ENCODE measurements at regions of chr19 and their contacts with region 1.

Region 1: DNA sequence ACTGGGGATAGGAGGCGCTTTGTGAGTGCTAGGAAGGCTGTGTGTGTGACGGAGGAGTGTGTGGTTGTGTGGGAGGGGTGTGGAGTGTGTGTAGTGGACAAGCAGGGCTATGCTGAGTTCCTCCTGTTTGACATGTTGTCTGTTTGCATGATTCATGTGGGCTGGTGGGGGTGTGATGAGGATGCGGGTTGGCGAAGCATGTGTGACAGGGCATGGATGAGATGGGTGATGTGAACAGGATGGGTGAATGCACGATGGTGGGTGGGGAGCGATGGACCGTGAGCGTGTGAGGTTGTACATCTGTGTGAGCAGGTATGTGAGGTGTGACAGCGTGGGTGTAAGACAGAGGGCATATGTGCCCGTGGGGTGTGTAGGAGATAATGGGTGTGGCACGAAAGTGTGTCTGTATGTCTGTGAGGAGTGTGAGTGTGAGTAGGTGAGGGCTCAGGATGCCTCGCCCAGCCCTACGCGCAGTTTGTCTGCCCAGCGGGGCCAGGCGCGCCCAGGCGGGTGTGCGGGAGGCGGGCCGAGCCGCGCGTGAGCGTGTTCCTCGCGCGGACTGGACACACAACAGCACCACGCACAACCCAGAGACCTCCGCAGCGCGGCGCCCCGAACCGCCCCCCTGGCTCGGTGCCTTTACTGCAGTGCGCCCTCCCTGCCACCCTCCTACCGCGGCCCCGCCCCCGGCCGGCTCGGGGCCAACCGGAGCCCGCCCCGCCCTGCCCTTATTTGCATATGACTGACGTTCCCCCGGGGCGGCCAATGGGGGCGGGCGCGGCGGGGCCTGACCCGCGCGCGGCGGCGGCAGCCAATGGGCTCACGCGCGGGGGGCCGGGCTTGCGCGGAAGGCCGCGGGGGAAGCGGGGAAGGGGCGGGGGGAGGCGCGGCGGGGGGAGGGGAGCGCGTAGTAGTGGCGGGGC is 14.4 kb downstream of the CIC start:
- DNase-seq: peak; percentile 90 to 98 (median 97)
- ATAC-seq: peak; percentile 69
- H3K4me3 ChIP-seq: peak overlapping the region; percentile 40 to 59
- H3K4me3 Mint-ChIP-seq: no peak overlapping the region
- H3K27ac ChIP-seq: peak overlapping the region; percentile 85 to 94
- H3K27ac Mint-ChIP-seq: no peak overlapping the region
- H3K4me1 ChIP-seq: peaks cover 47% of the 10 kb centered on the region
- H3K4me1 Mint-ChIP-seq: peaks cover 48% of the 10 kb centered on the region
- H3K27me3 ChIP-seq: no peaks in the 10 kb centered on the region
- H3K27me3 Mint-ChIP-seq: no peaks in the 10 kb centered on the region
- CTCF ChIP-seq: no peak

Region 2: DNA sequence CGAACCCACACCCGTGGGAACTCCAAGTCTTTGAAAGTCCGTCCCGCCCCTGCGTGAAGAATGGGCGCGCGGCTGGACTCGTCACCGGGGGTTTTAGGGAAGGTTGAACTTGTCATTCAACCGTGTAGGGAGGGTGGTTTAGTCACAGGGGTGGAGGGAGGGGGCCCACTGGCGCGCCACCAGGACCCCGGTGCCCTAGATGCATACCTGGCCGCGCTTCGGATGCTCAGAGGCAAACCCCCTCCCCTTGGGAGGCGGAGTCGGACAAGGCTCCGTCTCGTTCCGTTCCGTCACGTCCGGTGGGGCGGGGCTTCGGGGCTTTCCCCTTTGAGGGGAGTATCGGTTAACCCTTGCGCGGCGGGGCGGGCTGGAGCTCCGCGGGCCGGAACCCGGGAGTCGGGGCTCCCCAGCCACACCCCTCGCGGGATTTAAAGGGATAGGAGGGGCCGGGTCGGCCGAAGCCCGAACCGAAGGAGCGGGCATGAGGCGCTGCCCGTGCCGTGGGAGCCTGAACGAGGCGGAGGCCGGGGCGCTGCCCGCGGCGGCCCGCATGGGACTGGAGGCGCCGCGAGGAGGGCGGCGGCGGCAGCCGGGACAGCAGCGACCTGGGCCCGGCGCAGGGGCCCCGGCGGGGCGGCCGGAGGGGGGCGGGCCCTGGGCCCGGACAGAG is 1566.6 kb before region 1 on chr19 and contains the starts of genes COQ8B and ITPKC:
- CTCF ChIA-PET with region 1: no interaction called
- POLR2A ChIA-PET with region 1: no interaction called
- intact Hi-C with region 1: loop called in 1 of 2 experiments (anchors 10 kb)
- DNase-seq: peak; percentile 98 to 100 (median 100)
- ATAC-seq: peak; percentile 74
- H3K4me3 ChIP-seq: peak within 1 kb of the TSS; percentile 66 to 93
- H3K4me3 Mint-ChIP-seq: peak within 1 kb of the TSS; percentile 88
- H3K27ac ChIP-seq: peak within 1 kb of the TSS; percentile 88 to 89
- H3K27ac Mint-ChIP-seq: peak within 1 kb of the TSS; percentile 97
- H3K4me1 ChIP-seq: peaks cover 61% of the 10 kb centered on the region
- H3K4me1 Mint-ChIP-seq: peaks cover 70% of the 10 kb centered on the region
- H3K27me3 ChIP-seq: no peaks in the 10 kb centered on the region
- H3K27me3 Mint-ChIP-seq: no peaks in the 10 kb centered on the region
- CTCF ChIP-seq: no peak
- total RNA-seq, gene COQ8B: 14.0 to 14.2 TPM
- total RNA-seq, gene ITPKC: 5.9 to 6.4 TPM

Region 3: GRCh38 chr19:41998246-41999020 is 285.0 kb before region 1 on chr19:
- CTCF ChIA-PET with region 1: no interaction called
- POLR2A ChIA-PET with region 1: no interaction called
- intact Hi-C with region 1: no loop called
- DNase-seq: peak in 5 of 9 experiments; percentile 8 to 54 (median 28)
- ATAC-seq: no peak
- H3K4me3 ChIP-seq: no peak overlapping the region
- H3K4me3 Mint-ChIP-seq: no peak overlapping the region
- H3K27ac ChIP-seq: no peak overlapping the region
- H3K27ac Mint-ChIP-seq: no peak overlapping the region
- H3K4me1 ChIP-seq: peaks cover 15% of the 10 kb centered on the region
- H3K4me1 Mint-ChIP-seq: peaks cover 37% of the 10 kb centered on the region
- H3K27me3 ChIP-seq: peaks cover 26 to 32% of the 10 kb centered on the region in 2 experiments
- H3K27me3 Mint-ChIP-seq: peaks cover 62% of the 10 kb centered on the region
- CTCF ChIP-seq: peak; percentile 41

Region 4: GRCh38 chr19:42154471-42155323 is 128.7 kb before region 1 on chr19:
- CTCF ChIA-PET with region 1: no interaction called
- POLR2A ChIA-PET with region 1: no interaction called
- intact Hi-C with region 1: no loop called
- DNase-seq: no peak
- ATAC-seq: peak; percentile 34
- H3K4me3 ChIP-seq: no peak overlapping the region
- H3K4me3 Mint-ChIP-seq: no peak overlapping the region
- H3K27ac ChIP-seq: no peak overlapping the region
- H3K27ac Mint-ChIP-seq: no peak overlapping the region
- H3K4me1 ChIP-seq: peaks cover 13% of the 10 kb centered on the region
- H3K4me1 Mint-ChIP-seq: peaks cover 17% of the 10 kb centered on the region
- H3K27me3 ChIP-seq: no peaks in the 10 kb centered on the region
- H3K27me3 Mint-ChIP-seq: peaks cover 3% of the 10 kb centered on the region
- CTCF ChIP-seq: no peak

Region 5: DNA sequence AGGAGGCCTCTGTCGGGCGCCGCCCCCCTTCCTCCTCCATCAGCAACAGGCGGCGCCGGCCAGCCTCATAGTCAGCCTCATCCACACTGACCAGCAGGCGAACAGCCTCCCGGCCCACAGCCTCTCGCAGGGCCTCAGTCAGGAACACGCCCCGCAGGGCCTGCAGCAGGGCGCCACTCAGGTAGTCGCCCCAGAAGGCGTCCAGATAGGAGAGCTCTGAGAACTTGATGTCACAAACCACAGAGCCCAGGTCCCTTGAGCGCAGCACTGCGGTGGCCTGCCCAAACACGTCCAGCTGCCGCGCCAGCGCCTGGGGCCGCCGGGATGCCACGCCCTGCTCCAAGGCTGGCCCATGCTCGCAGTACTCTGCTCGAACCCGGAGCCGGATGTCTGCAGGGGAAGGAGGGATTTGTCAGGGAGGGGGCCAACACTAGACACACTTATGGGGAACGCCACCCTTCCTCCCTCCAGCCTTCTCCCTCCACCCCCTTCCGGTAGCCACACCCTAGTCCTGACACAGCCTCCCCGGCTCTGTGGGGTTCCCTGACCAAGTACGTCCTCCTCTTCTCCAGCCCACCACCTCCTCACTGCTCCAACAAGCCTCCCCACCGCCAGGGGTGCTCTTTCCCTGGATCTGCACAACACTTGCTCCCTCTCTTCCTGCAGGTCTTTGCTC is 83.8 kb before region 1 on chr19:
- CTCF ChIA-PET with region 1: interaction called, 5 read pairs
- POLR2A ChIA-PET with region 1: no interaction called
- intact Hi-C with region 1: loop called in 1 of 2 experiments (anchors 5 kb)
- DNase-seq: peak in 7 of 9 experiments; percentile 36 to 80 (median 64)
- ATAC-seq: peak; percentile 30
- H3K4me3 ChIP-seq: peak overlapping the region; percentile 50 to 59
- H3K4me3 Mint-ChIP-seq: peak overlapping the region; percentile 87
- H3K27ac ChIP-seq: peak overlapping the region; percentile 88 to 93
- H3K27ac Mint-ChIP-seq: peak overlapping the region; percentile 95
- H3K4me1 ChIP-seq: peaks cover 84% of the 10 kb centered on the region
- H3K4me1 Mint-ChIP-seq: peaks cover 81% of the 10 kb centered on the region
- H3K27me3 ChIP-seq: no peaks in the 10 kb centered on the region
- H3K27me3 Mint-ChIP-seq: no peaks in the 10 kb centered on the region
- CTCF ChIP-seq: peak; percentile 29

Region 6: GRCh38 chr19:42254989-42255765 is 28.2 kb before region 1 on chr19 and contains the start of gene ERF:
- CTCF ChIA-PET with region 1: interaction called, 11 read pairs
- POLR2A ChIA-PET with region 1: no interaction called
- intact Hi-C with region 1: loop called (anchors 1 kb)
- DNase-seq: peak; percentile 89 to 97 (median 93)
- ATAC-seq: peak; percentile 71
- H3K4me3 ChIP-seq: peak within 1 kb of the TSS; percentile 85 to 97
- H3K4me3 Mint-ChIP-seq: peak within 1 kb of the TSS; percentile 86
- H3K27ac ChIP-seq: peak within 1 kb of the TSS; percentile 96 to 97
- H3K27ac Mint-ChIP-seq: peak within 1 kb of the TSS; percentile 87
- H3K4me1 ChIP-seq: peaks cover 36% of the 10 kb centered on the region
- H3K4me1 Mint-ChIP-seq: peaks cover 27% of the 10 kb centered on the region
- H3K27me3 ChIP-seq: no peaks in the 10 kb centered on the region
- H3K27me3 Mint-ChIP-seq: no peaks in the 10 kb centered on the region
- CTCF ChIP-seq: no peak
- total RNA-seq, gene ERF: 92.1 to 95.1 TPM

Region 7: DNA sequence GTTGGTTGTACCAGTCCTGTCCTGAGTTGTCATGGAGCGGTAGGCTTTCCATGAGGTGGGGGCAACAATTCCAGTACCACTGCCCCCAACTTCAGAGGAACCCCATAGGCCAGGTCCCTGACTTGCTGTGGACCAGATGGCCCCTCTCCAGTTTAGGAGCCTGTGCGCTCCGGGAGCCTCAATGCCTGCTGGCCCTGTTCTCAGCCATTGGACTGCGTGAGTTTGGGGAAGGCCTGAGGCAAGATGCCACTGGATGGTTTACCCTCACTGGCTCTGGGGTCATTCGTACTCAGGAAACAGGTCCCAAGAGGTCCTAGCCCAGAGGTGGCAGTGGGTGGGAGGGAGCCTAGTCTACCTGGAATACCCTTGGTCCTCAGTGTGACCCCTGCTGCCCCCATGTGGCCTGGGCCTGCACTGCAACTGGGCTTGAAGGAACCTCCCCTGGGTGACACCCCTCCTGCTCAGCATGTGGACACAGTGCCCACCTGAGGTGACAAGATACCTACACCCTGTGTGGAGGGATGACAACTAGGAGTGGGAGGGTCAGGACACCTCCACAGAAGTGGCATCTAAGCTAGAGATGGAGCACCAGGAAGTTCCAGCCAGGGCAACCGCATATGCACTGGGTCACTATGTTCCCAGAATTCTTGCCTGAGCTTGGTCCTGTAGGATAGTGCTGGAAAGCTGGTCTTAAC is 12.6 kb after region 1 on chr19:
- CTCF ChIA-PET with region 1: interaction called, 24 read pairs
- POLR2A ChIA-PET with region 1: no interaction called
- intact Hi-C with region 1: no loop called
- DNase-seq: peak; percentile 85 to 95 (median 89)
- ATAC-seq: peak; percentile 100
- H3K4me3 ChIP-seq: no peak overlapping the region
- H3K4me3 Mint-ChIP-seq: no peak overlapping the region
- H3K27ac ChIP-seq: no peak overlapping the region
- H3K27ac Mint-ChIP-seq: no peak overlapping the region
- H3K4me1 ChIP-seq: peaks cover 8% of the 10 kb centered on the region
- H3K4me1 Mint-ChIP-seq: peaks cover 9% of the 10 kb centered on the region
- H3K27me3 ChIP-seq: no peaks in the 10 kb centered on the region
- H3K27me3 Mint-ChIP-seq: no peaks in the 10 kb centered on the region
- CTCF ChIP-seq: peak; percentile 96

Measured in CD8-positive, alpha-beta T cell (primary cell).